ENCODE measurements at regions of chr1 and their contacts with region 1.

Region 1: GRCh38 chr1:97524211-97524610 is 396.6 kb downstream of the DPYD start:
- DNase-seq: no peak
- CTCF ChIP-seq: no peak

Region 2: GRCh38 chr1:97174039-97174701 is 350.0 kb before region 1 on chr1:
- CTCF ChIA-PET with region 1: no interaction called
- POLR2A ChIA-PET with region 1: no interaction called
- DNase-seq: no peak
- CTCF ChIP-seq: no peak

Region 3: DNA sequence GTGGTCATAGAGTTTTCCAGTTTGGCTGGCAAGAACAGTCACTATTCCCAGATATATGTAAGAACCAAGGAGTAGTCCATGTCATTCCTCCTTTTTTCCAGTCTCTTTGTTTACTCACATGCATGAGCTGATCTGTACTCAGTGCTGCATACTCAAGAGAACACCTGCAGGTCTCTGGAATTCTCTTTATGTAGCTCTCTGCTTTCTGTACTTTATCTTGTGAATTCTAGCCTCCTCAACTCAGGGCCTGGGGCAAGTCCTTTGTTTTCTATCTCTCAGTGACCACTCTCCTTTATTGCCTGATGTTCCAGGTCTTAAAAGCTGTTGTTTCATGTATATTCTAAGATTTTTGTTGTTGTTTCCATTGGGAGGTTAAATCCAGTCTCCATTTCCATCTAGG is 82.2 kb before region 1 on chr1:
- CTCF ChIA-PET with region 1: no interaction called
- POLR2A ChIA-PET with region 1: no interaction called
- DNase-seq: no peak
- CTCF ChIP-seq: no peak

Region 4: DNA sequence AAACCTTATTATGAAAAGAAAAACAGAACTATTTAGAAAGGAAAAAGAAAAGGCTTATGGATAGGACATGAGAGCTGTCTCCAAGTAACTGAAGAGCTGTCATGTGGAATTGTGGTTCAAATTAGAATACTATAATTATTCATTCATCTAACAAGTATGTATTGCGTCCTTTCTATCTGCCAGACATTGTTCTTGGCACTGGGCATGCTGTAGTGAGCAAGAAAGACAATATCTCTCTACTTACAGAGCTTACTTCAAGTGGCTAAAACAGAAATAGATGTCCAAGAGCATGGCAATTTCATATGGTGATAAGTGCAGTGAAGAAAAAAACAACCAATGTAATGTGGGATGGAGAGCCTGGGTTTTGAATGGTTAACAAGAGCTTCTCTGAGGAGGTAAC is 16.3 kb before region 1 on chr1:
- CTCF ChIA-PET with region 1: interaction called, 10 read pairs
- POLR2A ChIA-PET with region 1: no interaction called
- DNase-seq: no peak
- CTCF ChIP-seq: no peak